HEK293 (cell line): ENCODE measurements at regions of chr15 and their contacts with region 1.

Region 1: GRCh38 chr15:51281368-51281967 is 56.9 kb downstream of the CYP19A1 start:
- H3K4me3 ChIP-seq: no peak overlapping the region
- H3K27ac ChIP-seq: no peak overlapping the region
- H3K4me1 ChIP-seq: no peaks in the 10 kb centered on the region
- CTCF ChIP-seq: peak; percentile 51

Region 2: GRCh38 chr15:51227940-51228783 is 53.3 kb before region 1 on chr15:
- CTCF ChIA-PET with region 1: interaction called, 14 read pairs
- POLR2A ChIA-PET with region 1: no interaction called
- H3K4me3 ChIP-seq: no peak overlapping the region
- H3K27ac ChIP-seq: no peak overlapping the region
- H3K4me1 ChIP-seq: no peaks in the 10 kb centered on the region
- CTCF ChIP-seq: no peak

Region 3: GRCh38 chr15:51270706-51271105 is 10.8 kb before region 1 on chr15:
- CTCF ChIA-PET with region 1: interaction called, 10 read pairs
- POLR2A ChIA-PET with region 1: no interaction called
- H3K4me3 ChIP-seq: no peak overlapping the region
- H3K27ac ChIP-seq: no peak overlapping the region
- H3K4me1 ChIP-seq: peaks cover 8% of the 10 kb centered on the region
- CTCF ChIP-seq: no peak